ENCODE measurements at regions of chr1 and their contacts with region 1.

Region 1: GRCh38 chr1:34852677-34853217 is 6.8 kb downstream of the SMIM12 start:
- DNase-seq: peak; percentile 97

Region 2: DNA sequence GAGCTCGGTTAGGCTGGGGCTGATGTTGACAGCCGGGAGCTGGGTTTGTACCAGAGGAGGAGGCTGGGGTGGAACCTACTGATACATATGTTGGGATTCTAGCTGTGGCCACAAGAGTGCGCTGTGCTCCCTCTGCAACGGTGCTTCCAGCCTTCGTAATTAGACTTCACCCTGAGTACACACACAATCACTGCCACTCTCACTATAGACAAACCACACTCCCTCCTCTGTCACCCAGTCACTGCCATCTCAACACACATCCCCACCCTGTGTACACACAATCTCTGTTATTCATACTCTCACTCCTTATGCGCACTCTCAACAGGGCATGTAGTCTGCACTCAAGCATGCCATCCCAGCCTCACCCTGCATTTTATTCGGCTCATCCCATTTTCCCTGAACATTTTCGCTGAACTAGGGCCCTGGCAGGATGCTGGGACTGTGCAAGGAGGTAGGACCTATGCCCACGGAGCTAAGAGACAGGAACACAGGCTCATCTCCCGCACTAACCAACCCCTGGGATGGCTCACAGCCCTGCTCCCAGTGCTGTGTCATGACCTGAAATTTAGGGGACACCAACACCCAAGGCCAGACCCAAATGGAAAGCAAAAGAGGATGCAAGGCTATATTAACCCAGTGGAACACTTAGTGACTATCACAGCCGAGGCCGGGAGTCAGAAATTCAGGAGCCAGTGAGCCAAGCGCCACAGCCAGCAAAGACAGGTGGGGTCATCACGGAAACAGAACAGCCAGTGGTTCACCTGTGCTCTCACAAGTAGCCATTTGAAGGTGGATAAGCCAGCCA is 66.0 kb before region 1 on chr1:
- intact Hi-C with region 1: loop called (anchors 5 kb)
- DNase-seq: peak; percentile 90

Region 3: DNA sequence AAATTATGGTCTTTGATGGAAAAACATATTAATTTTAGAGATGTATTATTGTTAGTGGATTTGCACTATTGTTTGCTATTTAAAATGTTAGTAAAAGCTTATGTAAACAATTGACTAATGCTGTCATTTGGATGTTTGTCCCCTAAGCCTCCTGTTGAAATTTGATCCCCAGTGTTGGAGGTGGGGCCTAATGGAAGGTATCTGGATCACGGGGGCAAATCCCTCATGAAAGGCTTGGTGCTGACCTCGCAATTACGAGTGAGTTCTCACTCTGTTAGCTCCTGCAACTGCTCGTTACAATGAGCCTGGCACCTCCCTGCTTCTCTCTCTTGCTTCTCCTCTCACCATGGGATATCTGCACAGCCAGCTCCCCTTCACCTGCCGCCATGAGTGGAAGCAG is 118.1 kb after region 1 on chr1:
- intact Hi-C with region 1: loop called in 1 of 2 experiments (anchors 10 kb)
- DNase-seq: no peak

Region 4: GRCh38 chr1:35319988-35320713 is 467.4 kb after region 1 on chr1:
- intact Hi-C with region 1: no loop called
- DNase-seq: no peak